Natural killer cell (primary cell): ENCODE measurements at regions of chr11 and their contacts with region 1.

Region 1: DNA sequence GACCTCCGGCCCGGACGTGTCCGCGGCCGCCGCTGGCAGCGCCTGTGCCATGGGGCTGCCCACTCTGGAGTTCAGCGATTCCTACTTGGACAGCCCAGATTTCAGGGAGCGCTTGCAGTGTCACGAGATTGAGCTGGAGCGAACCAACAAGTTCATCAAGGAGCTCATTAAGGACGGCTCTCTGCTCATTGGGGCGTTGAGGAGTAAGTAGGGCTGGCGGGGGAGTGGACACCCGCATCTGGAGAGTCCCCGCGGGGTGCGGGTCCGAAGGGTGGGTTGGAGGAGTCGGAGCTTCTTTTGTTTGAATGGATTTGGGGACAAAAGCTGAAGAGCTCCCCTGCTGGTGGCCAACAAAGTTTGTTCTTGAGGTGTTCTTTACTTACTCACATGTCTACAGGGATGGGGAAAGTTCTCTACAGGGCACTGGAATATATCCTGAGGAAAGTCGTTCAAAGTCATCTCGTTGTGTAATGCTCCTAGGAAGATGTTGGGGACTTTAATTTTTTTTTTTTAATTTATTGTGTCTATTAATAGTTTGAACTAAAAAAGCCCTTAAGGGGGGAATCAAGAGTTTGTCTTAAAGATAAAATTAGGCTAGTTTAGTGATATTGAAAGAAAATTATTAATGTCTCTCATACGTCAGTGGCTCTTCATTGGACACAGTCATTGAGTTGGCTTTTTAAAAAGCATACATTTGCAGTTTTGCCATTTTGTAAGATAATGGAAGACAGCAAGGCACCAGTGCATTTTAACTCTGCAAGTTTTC is 725 bp downstream of the ARHGAP42 start:
- DNase-seq: peak; percentile 19
- ATAC-seq: peak; percentile 57 to 71 (median 63)
- H3K4me3 ChIP-seq: peak overlapping the region; percentile 66
- H3K4me3 Mint-ChIP-seq: peak overlapping the region; percentile 97
- H3K27ac ChIP-seq: no peak overlapping the region
- H3K27ac Mint-ChIP-seq: peak overlapping the region; percentile 67 to 74
- H3K4me1 ChIP-seq: peaks cover 5% of the 10 kb centered on the region
- H3K4me1 Mint-ChIP-seq: peaks cover 40 to 55% of the 10 kb centered on the region in 2 donors
- H3K27me3 ChIP-seq: no peaks in the 10 kb centered on the region
- H3K27me3 Mint-ChIP-seq: no peaks in the 10 kb centered on the region
- CTCF ChIP-seq: peak; percentile 56

Region 2: GRCh38 chr11:100863080-100863581 is 175.3 kb after region 1 on chr11:
- intact Hi-C with region 1: loop called (anchors 10 kb)
- DNase-seq: no peak
- ATAC-seq: no peak
- H3K4me3 ChIP-seq: no peak overlapping the region
- H3K4me3 Mint-ChIP-seq: no peak overlapping the region
- H3K27ac ChIP-seq: no peak overlapping the region
- H3K27ac Mint-ChIP-seq: peak overlapping the region in 1 of 2 donors; percentile 5
- H3K4me1 ChIP-seq: no peaks in the 10 kb centered on the region
- H3K4me1 Mint-ChIP-seq: peaks cover 15 to 16% of the 10 kb centered on the region in 2 donors
- H3K27me3 ChIP-seq: no peaks in the 10 kb centered on the region
- H3K27me3 Mint-ChIP-seq: no peaks in the 10 kb centered on the region
- CTCF ChIP-seq: no peak